Caco-2 (cell line): ENCODE measurements at regions of chrX and their contacts with region 1.

Region 1: DNA sequence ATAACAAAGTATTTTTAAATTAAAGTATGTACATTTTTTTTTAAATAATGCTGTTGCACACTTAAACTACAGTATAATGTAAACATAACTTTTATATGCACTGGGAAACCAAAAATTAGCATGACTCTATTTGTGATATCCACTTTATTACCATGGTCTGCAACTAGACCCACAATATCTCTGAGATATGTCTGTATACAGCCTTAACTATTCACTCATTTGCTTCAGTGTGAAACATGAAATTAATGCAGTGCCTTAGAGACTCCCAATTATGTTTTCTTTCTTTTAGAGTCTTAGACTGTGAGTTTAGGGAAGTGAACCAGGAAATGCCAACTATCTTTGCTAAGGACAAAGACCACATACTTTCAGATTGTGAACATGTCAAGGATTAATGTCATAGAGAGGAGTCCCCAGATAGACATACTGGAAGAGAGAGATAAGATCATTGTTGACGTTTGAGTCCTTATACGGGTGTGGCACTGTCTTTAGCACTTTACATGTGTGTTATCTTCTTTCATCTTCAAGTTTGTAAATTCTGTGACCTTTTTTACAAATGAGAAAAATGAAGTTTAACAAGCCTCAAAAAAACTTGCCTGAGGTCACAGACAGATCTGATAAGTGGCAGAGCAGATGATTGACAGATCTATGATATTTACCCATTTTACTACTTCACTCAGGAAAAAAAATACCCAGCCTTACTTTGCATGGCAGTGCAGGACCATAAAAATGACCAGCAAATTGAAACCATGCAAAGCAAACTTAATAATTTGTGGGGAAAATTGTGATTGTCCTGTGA is 23.3 kb downstream of the CXorf58 start:
- DNase-seq: peak; percentile 36 to 51
- H3K4me3 ChIP-seq: no peak overlapping the region
- H3K4me3 Mint-ChIP-seq: no peak overlapping the region
- H3K27ac Mint-ChIP-seq: no peak overlapping the region
- H3K4me1 ChIP-seq: peaks cover 15% of the 10 kb centered on the region
- H3K4me1 Mint-ChIP-seq: no peaks in the 10 kb centered on the region
- H3K27me3 ChIP-seq: no peaks in the 10 kb centered on the region
- H3K27me3 Mint-ChIP-seq: no peaks in the 10 kb centered on the region
- CTCF ChIP-seq: no peak

Region 2: DNA sequence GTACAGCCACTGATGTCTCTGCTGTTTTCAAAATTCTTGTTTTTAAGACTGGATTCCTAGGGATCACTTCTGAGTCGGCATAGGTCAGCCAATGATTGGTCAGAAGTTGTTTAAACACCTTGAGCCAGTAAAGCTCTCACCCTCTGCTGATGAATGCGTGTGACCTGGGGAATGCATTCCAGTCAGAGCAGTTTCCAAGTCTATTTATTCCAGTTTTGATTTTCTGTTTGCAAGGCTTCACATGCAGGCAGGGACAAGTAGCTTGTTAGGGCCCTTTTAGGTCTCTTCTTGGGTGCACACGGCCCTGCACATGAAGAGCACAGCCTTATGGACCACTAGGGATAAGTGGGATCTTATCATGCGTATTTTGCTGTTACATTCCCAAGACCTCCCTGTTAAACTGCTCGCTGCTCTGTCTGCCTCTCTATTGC is 48.9 kb after region 1 on chrX:
- CTCF ChIA-PET with region 1: no interaction called
- POLR2A ChIA-PET with region 1: no interaction called
- intact Hi-C with region 1: loop called (anchors 5 kb)
- DNase-seq: peak in 1 of 2 experiments; percentile 28
- H3K4me3 ChIP-seq: no peak overlapping the region
- H3K4me3 Mint-ChIP-seq: peak overlapping the region; percentile 67
- H3K27ac Mint-ChIP-seq: peak overlapping the region; percentile 63
- H3K4me1 ChIP-seq: peaks cover 5% of the 10 kb centered on the region
- H3K4me1 Mint-ChIP-seq: peaks cover 9% of the 10 kb centered on the region
- H3K27me3 ChIP-seq: no peaks in the 10 kb centered on the region
- H3K27me3 Mint-ChIP-seq: no peaks in the 10 kb centered on the region
- CTCF ChIP-seq: no peak

Region 3: GRCh38 chrX:24024819-24025740 is 94.0 kb after region 1 on chrX:
- CTCF ChIA-PET with region 1: no interaction called
- POLR2A ChIA-PET with region 1: no interaction called
- intact Hi-C with region 1: loop called (anchors 10 kb)
- DNase-seq: peak; percentile 90
- H3K4me3 ChIP-seq: peak overlapping the region; percentile 90
- H3K4me3 Mint-ChIP-seq: peak overlapping the region; percentile 80
- H3K27ac Mint-ChIP-seq: peak overlapping the region; percentile 93
- H3K4me1 ChIP-seq: no peaks in the 10 kb centered on the region
- H3K4me1 Mint-ChIP-seq: no peaks in the 10 kb centered on the region
- H3K27me3 ChIP-seq: no peaks in the 10 kb centered on the region
- H3K27me3 Mint-ChIP-seq: no peaks in the 10 kb centered on the region
- CTCF ChIP-seq: no peak

Region 4: GRCh38 chrX:24448762-24449250 is 517.7 kb after region 1 on chrX:
- CTCF ChIA-PET with region 1: no interaction called
- POLR2A ChIA-PET with region 1: no interaction called
- intact Hi-C with region 1: no loop called
- DNase-seq: no peak
- H3K4me3 ChIP-seq: no peak overlapping the region
- H3K4me3 Mint-ChIP-seq: no peak overlapping the region
- H3K27ac Mint-ChIP-seq: no peak overlapping the region
- H3K4me1 ChIP-seq: no peaks in the 10 kb centered on the region
- H3K4me1 Mint-ChIP-seq: no peaks in the 10 kb centered on the region
- H3K27me3 ChIP-seq: no peaks in the 10 kb centered on the region
- H3K27me3 Mint-ChIP-seq: peaks cover 4% of the 10 kb centered on the region
- CTCF ChIP-seq: no peak